Endothelial cell of umbilical vein (primary cell): ENCODE measurements at regions of chr20 and their contacts with region 1.

Region 1: DNA sequence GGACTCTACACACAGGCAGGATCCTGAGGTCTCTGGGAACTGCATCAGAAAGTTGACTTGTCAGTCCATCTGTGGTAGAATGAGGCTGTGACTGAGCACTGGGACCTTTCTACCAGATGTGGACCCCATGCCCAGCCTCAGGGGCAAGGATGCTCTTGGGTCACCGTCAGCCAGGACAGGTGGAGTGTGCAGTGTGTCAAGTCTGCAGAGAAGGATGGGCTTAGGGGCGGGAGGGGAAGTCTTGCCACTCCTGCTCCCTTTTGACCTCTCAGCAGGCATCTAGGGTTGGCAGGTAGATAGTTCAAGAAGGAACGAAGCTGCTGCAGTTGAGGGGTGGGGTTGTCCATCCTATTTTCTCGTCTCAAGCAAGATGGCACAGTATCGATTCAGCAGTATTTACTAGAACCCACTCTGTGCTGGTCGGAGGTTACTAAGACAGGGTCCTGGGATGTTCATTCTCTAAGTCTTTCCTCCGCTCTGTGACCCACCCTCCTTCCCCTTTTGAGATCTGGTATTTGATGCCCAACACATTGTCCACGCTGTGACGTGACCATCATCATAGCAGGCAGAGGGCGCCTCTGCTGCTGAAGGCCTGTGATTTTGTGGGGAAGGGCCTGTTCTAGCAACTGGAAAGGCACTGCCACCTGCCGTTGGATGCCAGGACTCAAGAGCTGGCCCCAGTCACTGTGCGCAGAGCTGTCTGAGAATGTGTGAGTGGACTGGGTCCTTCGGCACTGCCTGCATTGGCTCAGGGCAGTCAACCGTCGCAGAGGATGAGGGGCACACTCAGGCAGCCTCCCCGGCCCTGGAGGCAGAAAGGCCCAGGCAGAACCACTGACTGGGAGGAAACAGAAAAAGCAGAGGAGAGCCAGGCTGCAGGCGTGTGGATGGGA is 23.2 kb downstream of the RBCK1 start:
- DNase-seq: peak; percentile 76
- H3K4me3 ChIP-seq: no peak overlapping the region
- H3K27ac ChIP-seq: no peak overlapping the region
- H3K4me1 ChIP-seq: no peaks in the 10 kb centered on the region
- H3K27me3 ChIP-seq: no peaks in the 10 kb centered on the region
- CTCF ChIP-seq: peak; percentile 76 to 86
- POLR2A ChIP-seq: no peak

Region 2: GRCh38 chr20:164618-165017 is 266.6 kb before region 1 on chr20:
- CTCF ChIA-PET with region 1: no interaction called
- POLR2A ChIA-PET with region 1: no interaction called
- dilution Hi-C with region 1: no loop called
- intact Hi-C with region 1: no loop called
- DNase-seq: no peak
- H3K4me3 ChIP-seq: no peak overlapping the region
- H3K27ac ChIP-seq: no peak overlapping the region
- H3K4me1 ChIP-seq: no peaks in the 10 kb centered on the region
- H3K27me3 ChIP-seq: peaks cover 2 to 7% of the 10 kb centered on the region in 2 experiments
- CTCF ChIP-seq: no peak
- POLR2A ChIP-seq: no peak

Region 3: GRCh38 chr20:316316-317068 is 114.8 kb before region 1 on chr20:
- CTCF ChIA-PET with region 1: no interaction called
- POLR2A ChIA-PET with region 1: no interaction called
- dilution Hi-C with region 1: no loop called
- intact Hi-C with region 1: no loop called
- DNase-seq: no peak
- H3K4me3 ChIP-seq: no peak overlapping the region
- H3K27ac ChIP-seq: no peak overlapping the region
- H3K4me1 ChIP-seq: peaks cover 13% of the 10 kb centered on the region
- H3K27me3 ChIP-seq: no peaks in the 10 kb centered on the region
- CTCF ChIP-seq: no peak
- POLR2A ChIP-seq: no peak

Region 4: GRCh38 chr20:354298-355064 is 76.8 kb before region 1 on chr20:
- CTCF ChIA-PET with region 1: interaction called, 120 read pairs
- POLR2A ChIA-PET with region 1: no interaction called
- dilution Hi-C with region 1: no loop called
- intact Hi-C with region 1: loop called (anchors 1 kb)
- DNase-seq: peak; percentile 76
- H3K4me3 ChIP-seq: no peak overlapping the region
- H3K27ac ChIP-seq: no peak overlapping the region
- H3K4me1 ChIP-seq: no peaks in the 10 kb centered on the region
- H3K27me3 ChIP-seq: no peaks in the 10 kb centered on the region
- CTCF ChIP-seq: peak; percentile 89 to 94
- POLR2A ChIP-seq: no peak

Region 5: GRCh38 chr20:371755-372542 is 59.3 kb before region 1 on chr20:
- CTCF ChIA-PET with region 1: interaction called, 17 read pairs
- POLR2A ChIA-PET with region 1: no interaction called
- dilution Hi-C with region 1: no loop called
- intact Hi-C with region 1: no loop called
- DNase-seq: peak; percentile 93
- H3K4me3 ChIP-seq: no peak overlapping the region
- H3K27ac ChIP-seq: peak overlapping the region; percentile 82
- H3K4me1 ChIP-seq: peaks cover 52% of the 10 kb centered on the region
- H3K27me3 ChIP-seq: no peaks in the 10 kb centered on the region
- CTCF ChIP-seq: no peak
- POLR2A ChIP-seq: no peak

Region 6: DNA sequence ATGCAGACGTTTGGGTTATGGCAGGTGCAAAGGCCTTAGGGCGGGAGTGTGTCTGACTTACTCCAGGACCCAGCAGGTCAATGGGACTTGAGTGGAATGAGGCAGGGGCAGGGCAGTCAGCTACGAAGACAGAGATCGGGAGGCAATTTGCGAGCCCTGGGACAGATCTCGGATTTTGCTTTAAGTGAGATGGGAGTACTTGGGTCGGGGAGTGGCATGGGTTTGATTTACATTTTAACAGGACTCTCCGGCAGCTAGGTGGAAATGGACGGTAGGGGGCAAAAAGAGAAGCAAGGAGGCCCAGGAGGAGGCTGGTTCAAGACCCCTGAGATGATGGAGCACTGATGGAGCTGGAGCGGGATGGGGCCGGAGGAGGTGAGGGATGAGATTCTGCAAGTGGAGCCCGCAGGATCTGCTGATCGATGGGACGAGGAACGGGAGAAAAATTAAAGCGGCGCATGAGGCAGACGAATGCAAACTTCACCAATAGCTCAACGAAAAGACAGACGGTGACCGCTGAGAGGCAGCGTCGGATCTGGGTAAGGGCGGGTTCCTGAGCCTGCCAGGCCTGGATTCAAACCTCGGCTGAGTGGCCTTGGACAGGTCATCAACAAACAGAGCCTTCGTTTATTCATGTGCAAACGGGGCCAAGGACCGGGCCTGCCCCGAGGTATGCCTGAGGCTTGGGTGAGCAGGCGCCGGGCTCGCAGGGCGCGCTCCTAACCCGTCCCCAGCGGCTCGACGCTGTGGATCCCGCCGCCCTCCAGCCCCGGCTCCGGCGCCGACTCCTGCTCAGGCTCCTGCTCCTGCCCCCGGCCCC is 23.9 kb before region 1 on chr20:
- CTCF ChIA-PET with region 1: interaction called, 23 read pairs
- POLR2A ChIA-PET with region 1: no interaction called
- dilution Hi-C with region 1: no loop called
- intact Hi-C with region 1: no loop called
- DNase-seq: peak; percentile 84
- H3K4me3 ChIP-seq: peak overlapping the region; percentile 14 to 51 (median 29)
- H3K27ac ChIP-seq: peak overlapping the region; percentile 50
- H3K4me1 ChIP-seq: peaks cover 17% of the 10 kb centered on the region
- H3K27me3 ChIP-seq: no peaks in the 10 kb centered on the region
- CTCF ChIP-seq: peak; percentile 11 to 18
- POLR2A ChIP-seq: peak; percentile 61

Region 7: DNA sequence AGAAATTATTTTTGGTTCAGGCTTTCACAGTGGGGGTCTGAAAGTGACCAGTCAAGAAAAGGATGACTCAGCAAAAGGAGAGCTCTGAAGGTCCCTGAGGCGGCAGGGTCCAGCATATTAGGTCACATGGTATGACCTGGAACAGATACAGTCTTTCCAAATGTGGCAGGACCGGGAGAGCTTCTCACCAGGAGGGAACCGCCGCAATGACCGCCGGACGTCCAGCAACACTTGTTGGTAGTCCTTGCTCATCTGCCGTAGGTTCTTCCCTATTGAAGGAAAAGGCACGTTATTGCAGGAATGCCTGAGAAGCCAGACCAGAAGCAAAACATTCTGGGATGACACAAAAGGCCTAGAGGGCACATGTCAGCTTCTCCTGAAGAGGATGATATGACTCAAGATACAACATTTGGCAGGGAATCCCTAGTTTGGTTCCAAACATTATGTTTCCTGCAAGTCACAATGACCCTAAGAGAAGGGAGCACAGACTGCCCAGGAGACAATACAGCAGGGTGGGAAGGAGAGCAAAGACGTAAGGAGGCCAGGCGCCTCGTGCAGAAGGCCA is 13.7 kb after region 1 on chr20:
- CTCF ChIA-PET with region 1: interaction called, 15 read pairs
- POLR2A ChIA-PET with region 1: no interaction called
- dilution Hi-C with region 1: no loop called
- intact Hi-C with region 1: no loop called
- DNase-seq: peak; percentile 42
- H3K4me3 ChIP-seq: no peak overlapping the region
- H3K27ac ChIP-seq: no peak overlapping the region
- H3K4me1 ChIP-seq: peaks cover 6% of the 10 kb centered on the region
- H3K27me3 ChIP-seq: no peaks in the 10 kb centered on the region
- CTCF ChIP-seq: no peak
- POLR2A ChIP-seq: no peak